ENCODE measurements at regions of chr17 and their contacts with region 1.

Region 1: GRCh38 chr17:40287494-40288369 is at the start of gene CDC6:
- DNase-seq: peak; percentile 96 to 99
- H3K4me3 ChIP-seq: peak within 1 kb of the TSS; percentile 57 to 58
- H3K27ac ChIP-seq: peak within 1 kb of the TSS in 1 of 2 donors; percentile 27
- H3K4me1 ChIP-seq: peaks cover 0 to 8% of the 10 kb centered on the region in 2 donors
- H3K27me3 ChIP-seq: no peaks in the 10 kb centered on the region
- CTCF ChIP-seq: no peak
- total RNA-seq, gene CDC6: 1.2 TPM

Region 2: GRCh38 chr17:40203131-40203530 is 84.6 kb before region 1 on chr17:
- intact Hi-C with region 1: loop called (anchors 2 kb)
- DNase-seq: no peak
- H3K4me3 ChIP-seq: no peak overlapping the region
- H3K27ac ChIP-seq: no peak overlapping the region
- H3K4me1 ChIP-seq: no peaks in the 10 kb centered on the region
- H3K27me3 ChIP-seq: no peaks in the 10 kb centered on the region
- CTCF ChIP-seq: no peak

Region 3: DNA sequence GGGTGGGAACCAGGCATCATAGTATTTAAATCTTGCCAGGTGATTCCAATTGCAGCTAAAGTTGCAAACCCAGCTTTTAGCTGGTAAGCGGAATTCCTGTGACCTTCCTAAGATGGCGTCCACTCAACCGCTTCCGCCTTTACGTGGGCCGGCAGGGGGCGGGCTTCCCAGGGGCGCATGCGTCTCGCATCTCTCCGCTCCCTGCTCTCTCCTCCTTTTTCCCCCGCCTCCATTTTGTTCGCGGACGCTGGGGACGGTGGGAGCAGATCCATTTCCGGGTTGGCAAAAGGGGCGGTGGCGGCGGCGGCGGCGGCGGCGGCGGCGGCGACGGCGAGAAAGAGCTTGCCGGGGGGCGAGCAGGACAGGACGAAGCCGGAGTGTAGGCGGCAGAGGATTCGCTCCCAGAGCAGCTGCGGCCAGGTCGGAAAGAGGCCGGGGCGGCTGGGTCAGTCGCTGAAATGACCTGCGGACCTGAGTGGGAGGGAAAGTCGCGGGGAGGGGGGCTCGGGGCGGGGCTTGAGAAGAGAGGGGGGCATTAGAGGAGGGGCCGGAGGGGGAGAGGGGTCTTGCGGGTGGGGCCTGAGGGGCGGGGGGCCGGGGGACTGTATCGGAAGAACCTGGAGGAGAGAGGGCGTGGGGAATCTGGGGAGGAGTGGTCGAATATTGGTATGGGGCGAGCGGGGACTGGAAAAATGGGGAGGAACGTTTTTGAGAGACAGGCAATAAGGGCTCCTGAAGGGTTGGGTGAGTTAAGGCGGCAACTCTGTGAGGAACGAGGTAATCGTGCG is 68.5 kb before region 1 on chr17 and contains the start of gene WIPF2:
- intact Hi-C with region 1: loop called (anchors 2 kb)
- DNase-seq: peak; percentile 84 to 98
- H3K4me3 ChIP-seq: peak within 1 kb of the TSS; percentile 53 to 86
- H3K27ac ChIP-seq: peak within 1 kb of the TSS; percentile 84 to 97
- H3K4me1 ChIP-seq: peaks cover 3 to 12% of the 10 kb centered on the region in 2 donors
- H3K27me3 ChIP-seq: no peaks in the 10 kb centered on the region
- CTCF ChIP-seq: peak; percentile 61 to 79 (median 69)
- total RNA-seq, gene WIPF2: 11.2 TPM

Region 4: GRCh38 chr17:40322356-40323315 is 34.9 kb after region 1 on chr17:
- intact Hi-C with region 1: no loop called
- DNase-seq: peak; percentile 80 to 94
- H3K4me3 ChIP-seq: peak overlapping the region; percentile 37 to 86
- H3K27ac ChIP-seq: peak overlapping the region; percentile 90 to 91
- H3K4me1 ChIP-seq: peaks cover 48 to 87% of the 10 kb centered on the region in 2 donors
- H3K27me3 ChIP-seq: no peaks in the 10 kb centered on the region
- CTCF ChIP-seq: no peak